CD8-positive, alpha-beta T cell (primary cell): ENCODE measurements at regions of chr18 and their contacts with region 1.

Region 1: DNA sequence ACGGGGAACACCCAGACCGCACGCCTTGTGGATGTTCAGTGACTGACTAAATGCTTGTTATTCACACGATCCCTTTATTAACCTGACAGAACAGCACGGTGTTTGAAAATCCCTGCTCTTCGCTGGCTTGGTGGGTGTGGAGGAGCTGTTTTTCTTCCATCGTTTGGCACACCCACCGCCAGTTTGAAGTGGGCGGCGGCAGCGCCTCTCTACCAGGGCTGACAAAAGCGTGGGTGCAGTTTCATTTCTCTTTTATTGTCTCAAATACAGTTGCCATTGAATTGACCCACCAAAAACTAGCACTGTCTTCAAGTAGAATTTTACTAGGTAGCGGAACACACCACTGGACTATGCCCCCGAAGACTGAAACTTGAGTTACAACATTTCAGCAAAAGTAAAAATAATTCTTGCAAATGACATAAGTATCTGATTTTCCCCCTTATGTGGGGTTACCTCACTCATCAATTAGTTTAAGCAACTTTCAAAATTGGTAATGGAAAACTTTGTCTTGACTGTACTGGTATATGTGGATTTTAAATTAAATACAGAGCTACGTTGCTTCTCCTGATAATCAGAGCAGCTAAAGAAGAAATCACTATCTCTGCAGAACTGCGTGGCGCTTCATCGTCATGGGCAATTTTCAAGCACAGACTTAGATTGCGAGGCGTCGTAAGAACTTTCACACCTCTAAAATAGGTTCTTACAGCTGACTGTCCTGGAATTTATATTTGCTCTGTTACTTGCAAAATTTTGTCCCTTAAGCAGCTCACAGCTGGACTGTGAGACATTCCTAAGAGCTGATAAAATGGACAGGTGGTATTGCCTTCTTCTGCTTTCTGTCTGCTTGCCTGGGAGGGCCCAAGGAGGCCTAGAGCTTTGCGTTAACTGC is 60.9 kb downstream of the LDLRAD4 start:
- DNase-seq: peak in 5 of 9 experiments; percentile 22 to 59 (median 47)
- ATAC-seq: peak; percentile 61
- H3K4me3 ChIP-seq: peak overlapping the region; percentile 8 to 12
- H3K4me3 Mint-ChIP-seq: peak overlapping the region; percentile 73
- H3K27ac ChIP-seq: no peak overlapping the region
- H3K27ac Mint-ChIP-seq: peak overlapping the region; percentile 78
- H3K4me1 ChIP-seq: peaks cover 52% of the 10 kb centered on the region
- H3K4me1 Mint-ChIP-seq: peaks cover 78% of the 10 kb centered on the region
- H3K27me3 ChIP-seq: no peaks in the 10 kb centered on the region
- H3K27me3 Mint-ChIP-seq: no peaks in the 10 kb centered on the region
- CTCF ChIP-seq: no peak

Region 2: DNA sequence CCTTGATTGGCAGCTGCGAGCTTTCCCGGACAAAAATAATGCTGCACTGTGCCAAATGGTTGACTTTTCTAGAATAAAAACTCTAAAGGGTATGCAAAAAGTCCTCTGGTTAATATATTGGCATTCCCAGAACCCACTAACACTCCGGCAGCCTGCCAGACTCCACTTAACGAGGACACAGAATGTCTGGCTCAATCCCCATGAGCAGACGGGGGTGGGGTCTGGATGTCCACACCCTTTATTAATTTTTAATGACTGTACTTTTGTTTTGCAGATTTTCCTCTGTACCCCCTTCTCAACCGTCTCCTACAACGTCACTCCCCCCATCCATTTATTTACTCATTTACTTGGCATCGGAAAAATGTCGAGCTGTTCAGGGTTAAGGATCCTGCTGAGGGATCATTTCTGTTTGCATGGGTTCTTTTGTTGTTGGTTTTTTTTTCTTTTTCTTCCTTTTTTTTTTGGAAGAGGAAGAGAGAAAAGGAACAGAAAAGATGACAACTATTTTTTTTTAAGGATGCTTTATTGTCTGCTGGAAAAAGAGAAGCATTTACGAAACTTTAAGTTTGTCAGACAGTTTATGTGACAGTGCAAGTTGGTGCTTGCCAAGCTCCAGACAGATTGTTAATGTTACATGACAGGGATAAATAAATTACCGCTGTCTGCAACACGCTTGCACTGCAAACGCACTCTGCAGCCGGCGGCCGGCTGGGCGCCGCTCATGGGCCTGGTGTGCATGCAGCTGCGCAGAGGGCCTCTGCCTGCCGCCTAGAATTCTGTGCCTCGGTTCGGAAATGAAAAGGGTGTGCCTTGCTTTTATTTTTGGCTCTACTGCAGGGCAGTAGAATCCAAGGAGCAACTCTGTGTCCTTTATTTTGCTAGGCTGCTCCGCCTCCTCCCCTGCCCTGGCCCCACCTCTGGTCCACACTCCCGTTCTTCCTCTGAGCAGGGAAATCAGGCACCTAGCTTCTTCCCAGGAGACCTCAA is 57.3 kb before region 1 on chr18:
- CTCF ChIA-PET with region 1: no interaction called
- POLR2A ChIA-PET with region 1: interaction called, 3 read pairs
- intact Hi-C with region 1: loop called in 1 of 2 experiments (anchors 5 kb)
- DNase-seq: no peak
- ATAC-seq: no peak
- H3K4me3 ChIP-seq: no peak overlapping the region
- H3K4me3 Mint-ChIP-seq: peak overlapping the region; percentile 13
- H3K27ac ChIP-seq: no peak overlapping the region
- H3K27ac Mint-ChIP-seq: peak overlapping the region; percentile 28
- H3K4me1 ChIP-seq: peaks cover 28% of the 10 kb centered on the region
- H3K4me1 Mint-ChIP-seq: peaks cover 35% of the 10 kb centered on the region
- H3K27me3 ChIP-seq: peaks cover 0 to 3% of the 10 kb centered on the region in 2 experiments
- H3K27me3 Mint-ChIP-seq: peaks cover 2% of the 10 kb centered on the region
- CTCF ChIP-seq: no peak

Region 3: GRCh38 chr18:13296867-13297574 is 17.6 kb after region 1 on chr18:
- CTCF ChIA-PET with region 1: interaction called, 3 read pairs
- POLR2A ChIA-PET with region 1: interaction called, 3 read pairs
- intact Hi-C with region 1: loop called in 1 of 2 experiments (anchors 2 kb)
- DNase-seq: peak in 1 of 9 experiments; percentile 56
- ATAC-seq: peak; percentile 39
- H3K4me3 ChIP-seq: no peak overlapping the region
- H3K4me3 Mint-ChIP-seq: peak overlapping the region; percentile 15
- H3K27ac ChIP-seq: no peak overlapping the region
- H3K27ac Mint-ChIP-seq: peak overlapping the region; percentile 83
- H3K4me1 ChIP-seq: peaks cover 13% of the 10 kb centered on the region
- H3K4me1 Mint-ChIP-seq: peaks cover 51% of the 10 kb centered on the region
- H3K27me3 ChIP-seq: no peaks in the 10 kb centered on the region
- H3K27me3 Mint-ChIP-seq: no peaks in the 10 kb centered on the region
- CTCF ChIP-seq: no peak

Region 4: GRCh38 chr18:13313006-13313686 is 33.7 kb after region 1 on chr18:
- CTCF ChIA-PET with region 1: interaction called, 3 read pairs
- POLR2A ChIA-PET with region 1: interaction called, 3 read pairs
- intact Hi-C with region 1: loop called in 1 of 2 experiments (anchors 5 kb)
- DNase-seq: peak in 7 of 9 experiments; percentile 26 to 75 (median 53)
- ATAC-seq: peak; percentile 77
- H3K4me3 ChIP-seq: no peak overlapping the region
- H3K4me3 Mint-ChIP-seq: peak overlapping the region; percentile 38
- H3K27ac ChIP-seq: peak overlapping the region; percentile 10 to 15
- H3K27ac Mint-ChIP-seq: peak overlapping the region; percentile 90
- H3K4me1 ChIP-seq: peaks cover 34% of the 10 kb centered on the region
- H3K4me1 Mint-ChIP-seq: peaks cover 48% of the 10 kb centered on the region
- H3K27me3 ChIP-seq: peaks cover 0 to 2% of the 10 kb centered on the region in 2 experiments
- H3K27me3 Mint-ChIP-seq: no peaks in the 10 kb centered on the region
- CTCF ChIP-seq: no peak